Posterior vena cava (tissue), 2 donors: ENCODE measurements at regions of chr12 and their contacts with region 1.

Region 1: DNA sequence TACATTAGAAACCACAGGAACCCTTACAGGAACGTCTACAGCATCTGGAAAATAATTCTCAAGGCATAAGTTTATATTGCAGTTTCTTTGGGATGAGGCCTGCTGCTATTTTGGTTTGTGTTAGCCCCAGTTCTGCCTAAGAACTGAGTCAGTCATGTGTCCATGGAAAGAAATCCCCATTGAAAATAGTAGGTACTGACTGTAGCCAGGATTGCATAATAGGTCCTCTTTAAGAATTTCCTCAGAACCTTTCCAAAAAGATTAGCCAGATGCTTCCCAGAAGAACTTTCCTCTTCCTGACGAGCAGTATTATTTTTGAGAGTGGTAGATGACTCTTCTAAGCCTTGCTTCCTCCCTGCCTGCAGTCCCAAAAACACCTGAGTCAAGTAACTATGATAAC is 52.6 kb downstream of the RASSF8 start:
- DNase-seq: no peak

Region 2: GRCh38 chr12:25970916-25971653 is 40.0 kb before region 1 on chr12:
- intact Hi-C with region 1: loop called in 1 of 2 experiments (anchors 5 kb)
- DNase-seq: no peak

Region 3: GRCh38 chr12:25982416-25982815 is 28.7 kb before region 1 on chr12:
- intact Hi-C with region 1: no loop called
- DNase-seq: no peak

Region 4: GRCh38 chr12:26109343-26109844 is 98.3 kb after region 1 on chr12:
- intact Hi-C with region 1: no loop called
- DNase-seq: no peak

Region 5: GRCh38 chr12:26188127-26188526 is 177.0 kb after region 1 on chr12:
- intact Hi-C with region 1: no loop called
- DNase-seq: no peak